Mucosa of descending colon (tissue), 3 donors: ENCODE measurements at regions of chr15 and their contacts with region 1.

Region 1: GRCh38 chr15:97909291-97909891 is 51.1 kb upstream of the ARRDC4 start:
- DNase-seq: peak; percentile 52 to 83 (median 82)
- ATAC-seq: peak; percentile 93
- H3K4me3 ChIP-seq: no peak overlapping the region
- H3K4me1 ChIP-seq: peaks cover 2% of the 10 kb centered on the region
- CTCF ChIP-seq: peak; percentile 83

Region 2: GRCh38 chr15:98085003-98085639 is 175.7 kb after region 1 on chr15:
- intact Hi-C with region 1: loop called (anchors 2 to 5 kb)
- DNase-seq: peak in 1 of 3 donors; percentile 72
- ATAC-seq: peak; percentile 47
- H3K4me3 ChIP-seq: no peak overlapping the region
- H3K4me1 ChIP-seq: no peaks in the 10 kb centered on the region
- CTCF ChIP-seq: no peak

Region 3: DNA sequence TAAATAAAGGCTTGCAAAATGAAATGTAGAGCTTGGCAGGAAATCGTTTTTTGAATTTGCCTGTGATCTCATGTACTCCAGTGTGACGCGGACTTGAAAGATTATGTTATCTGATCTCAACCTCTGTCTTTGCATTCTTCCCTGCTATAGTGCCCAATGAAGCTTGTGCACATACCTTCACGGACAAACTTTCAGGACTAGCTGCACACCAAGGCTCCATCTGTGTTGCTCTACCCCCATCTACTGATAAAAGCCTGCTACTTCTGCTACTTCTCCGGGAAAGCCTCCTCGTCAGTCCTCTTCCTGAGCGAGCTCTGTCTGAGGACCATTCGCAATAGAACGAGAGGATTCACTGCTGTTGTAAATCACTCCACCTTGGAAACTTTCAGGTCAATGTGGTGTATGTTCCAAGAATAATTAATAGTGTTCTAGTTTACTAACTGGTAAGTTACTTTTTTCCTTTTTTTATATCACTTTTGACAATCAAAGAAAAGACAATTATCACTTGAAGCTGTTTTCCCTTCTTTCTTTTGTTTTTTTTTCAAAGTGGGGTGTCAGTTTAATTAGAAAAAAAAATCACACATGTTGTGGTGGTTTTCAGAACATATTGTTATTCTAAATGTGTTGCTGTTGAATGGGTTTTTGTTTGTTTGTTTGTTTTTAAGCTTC is 268.7 kb after region 1 on chr15:
- intact Hi-C with region 1: loop called (anchors 5 kb)
- DNase-seq: peak in 1 of 3 donors; percentile 63
- ATAC-seq: peak; percentile 72
- H3K4me3 ChIP-seq: no peak overlapping the region
- H3K4me1 ChIP-seq: no peaks in the 10 kb centered on the region
- CTCF ChIP-seq: peak; percentile 65

Region 4: DNA sequence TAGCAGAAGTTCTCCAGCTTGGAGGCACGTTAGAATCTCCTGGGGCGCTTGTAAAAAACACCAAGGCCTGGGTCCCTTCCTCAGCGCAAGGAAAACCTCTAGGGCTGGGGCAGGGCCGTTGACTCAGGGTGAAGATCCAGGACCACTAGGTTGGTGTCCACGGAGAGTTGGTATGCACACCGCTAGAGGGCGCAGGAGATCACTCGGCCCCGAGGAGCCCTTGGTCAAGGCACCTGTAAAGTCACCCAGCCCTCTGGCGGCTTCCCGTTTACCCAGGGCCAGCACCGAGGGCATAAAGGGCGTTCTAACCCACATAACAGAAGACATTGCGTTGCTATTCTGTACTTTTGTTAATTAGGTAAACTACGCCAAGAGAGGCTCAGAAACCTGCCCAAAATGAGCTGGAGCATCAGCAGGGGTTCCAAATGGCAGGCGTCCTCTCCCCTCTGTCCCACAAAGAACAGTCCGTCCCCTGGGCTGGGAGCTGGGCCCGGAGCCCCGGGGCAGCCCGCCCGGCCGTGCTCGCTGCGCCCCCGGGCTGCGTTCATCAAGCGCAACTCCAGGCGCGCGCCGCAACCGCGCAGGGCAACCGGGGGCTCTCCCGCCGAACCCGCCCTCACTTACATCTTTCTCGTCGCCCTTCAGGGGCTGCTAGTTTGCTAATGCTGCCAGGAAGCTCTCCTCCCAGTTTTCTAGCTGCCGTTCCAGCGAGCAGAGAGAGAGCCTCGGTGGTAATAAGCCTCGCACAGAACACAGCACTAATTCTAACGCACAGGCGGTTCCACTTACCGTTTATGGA is 383.2 kb after region 1 on chr15:
- intact Hi-C with region 1: loop called in 1 of 2 experiments (anchors 10 kb)
- DNase-seq: peak in 2 of 3 donors; percentile 49 to 65
- ATAC-seq: peak; percentile 74
- H3K4me3 ChIP-seq: no peak overlapping the region
- H3K4me1 ChIP-seq: peaks cover 5% of the 10 kb centered on the region
- CTCF ChIP-seq: peak; percentile 54